Endothelial cell of umbilical vein (primary cell): ENCODE measurements at regions of chr14 and their contacts with region 1.

Region 1: DNA sequence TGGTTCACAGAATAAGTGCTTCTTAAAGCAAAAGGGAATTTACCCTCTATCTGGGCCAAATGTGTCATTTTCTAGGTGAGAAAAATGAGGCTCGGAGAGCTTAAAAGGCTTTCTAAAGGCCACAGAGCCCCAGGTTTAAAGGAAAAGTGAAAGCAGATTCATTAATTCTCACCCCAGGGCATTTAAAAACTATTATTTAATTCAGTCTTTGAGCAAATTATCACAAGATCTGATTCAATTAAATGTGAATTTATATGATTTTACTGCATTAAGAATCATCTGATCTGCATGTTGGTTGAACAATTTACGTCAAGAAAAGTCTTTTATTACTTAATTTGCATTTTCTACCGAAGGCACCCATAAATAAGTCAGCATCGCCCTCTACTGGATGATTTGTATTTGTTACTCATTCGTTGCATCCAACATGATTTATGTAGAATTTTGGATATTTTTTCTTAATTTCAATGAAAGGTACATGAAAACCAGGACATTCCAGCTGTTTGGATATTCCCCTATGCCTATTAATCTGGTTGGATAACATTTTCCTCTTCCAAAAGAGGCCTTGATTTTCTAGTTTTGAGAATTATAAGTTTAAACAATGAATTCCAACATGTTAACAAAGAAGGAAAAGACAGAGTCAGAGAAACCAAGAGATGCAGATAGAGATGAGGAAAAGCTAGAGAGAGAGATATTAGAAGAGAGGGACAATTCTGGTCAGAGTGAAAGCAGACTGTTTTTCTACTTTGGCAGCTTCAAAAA is 19.1 kb upstream of the DHRS7 start:
- DNase-seq: peak; percentile 74
- H3K4me3 ChIP-seq: peak overlapping the region; percentile 15 to 67 (median 22)
- H3K27ac ChIP-seq: no peak overlapping the region
- H3K4me1 ChIP-seq: no peaks in the 10 kb centered on the region
- H3K27me3 ChIP-seq: peaks cover 0 to 8% of the 10 kb centered on the region in 2 experiments
- CTCF ChIP-seq: peak; percentile 34 to 45
- POLR2A ChIP-seq: no peak

Region 2: DNA sequence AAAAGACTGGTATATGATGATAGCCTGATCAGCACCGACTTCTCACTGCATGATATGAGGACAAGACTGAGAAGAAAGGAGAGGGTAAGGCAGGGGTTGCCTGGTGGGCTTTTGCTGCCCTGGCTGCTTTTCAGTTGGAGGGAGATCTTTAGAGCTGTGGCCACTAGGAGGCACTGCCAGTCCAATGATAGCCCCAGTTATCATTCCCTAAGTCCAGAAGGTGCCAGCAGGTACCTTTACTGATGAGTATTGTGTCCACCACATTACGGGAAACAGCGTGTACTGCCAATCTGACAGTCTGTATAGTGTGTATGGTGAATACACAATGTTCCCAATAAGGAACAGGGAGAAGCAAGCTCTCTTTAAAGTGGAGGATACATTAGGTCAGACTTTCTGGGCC is 551.9 kb before region 1 on chr14:
- CTCF ChIA-PET with region 1: interaction called, 21 read pairs
- POLR2A ChIA-PET with region 1: no interaction called
- dilution Hi-C with region 1: no loop called
- intact Hi-C with region 1: loop called (anchors 1 kb)
- DNase-seq: peak; percentile 24
- H3K4me3 ChIP-seq: no peak overlapping the region
- H3K27ac ChIP-seq: no peak overlapping the region
- H3K4me1 ChIP-seq: no peaks in the 10 kb centered on the region
- H3K27me3 ChIP-seq: peaks cover 16 to 47% of the 10 kb centered on the region in 2 experiments
- CTCF ChIP-seq: peak; percentile 49 to 52
- POLR2A ChIP-seq: no peak

Region 3: GRCh38 chr14:59863806-59864525 is 320.4 kb before region 1 on chr14:
- CTCF ChIA-PET with region 1: no interaction called
- POLR2A ChIA-PET with region 1: no interaction called
- dilution Hi-C with region 1: no loop called
- intact Hi-C with region 1: no loop called
- DNase-seq: no peak
- H3K4me3 ChIP-seq: no peak overlapping the region
- H3K27ac ChIP-seq: no peak overlapping the region
- H3K4me1 ChIP-seq: no peaks in the 10 kb centered on the region
- H3K27me3 ChIP-seq: peaks cover 6 to 33% of the 10 kb centered on the region in 2 experiments
- CTCF ChIP-seq: no peak
- POLR2A ChIP-seq: no peak

Region 4: DNA sequence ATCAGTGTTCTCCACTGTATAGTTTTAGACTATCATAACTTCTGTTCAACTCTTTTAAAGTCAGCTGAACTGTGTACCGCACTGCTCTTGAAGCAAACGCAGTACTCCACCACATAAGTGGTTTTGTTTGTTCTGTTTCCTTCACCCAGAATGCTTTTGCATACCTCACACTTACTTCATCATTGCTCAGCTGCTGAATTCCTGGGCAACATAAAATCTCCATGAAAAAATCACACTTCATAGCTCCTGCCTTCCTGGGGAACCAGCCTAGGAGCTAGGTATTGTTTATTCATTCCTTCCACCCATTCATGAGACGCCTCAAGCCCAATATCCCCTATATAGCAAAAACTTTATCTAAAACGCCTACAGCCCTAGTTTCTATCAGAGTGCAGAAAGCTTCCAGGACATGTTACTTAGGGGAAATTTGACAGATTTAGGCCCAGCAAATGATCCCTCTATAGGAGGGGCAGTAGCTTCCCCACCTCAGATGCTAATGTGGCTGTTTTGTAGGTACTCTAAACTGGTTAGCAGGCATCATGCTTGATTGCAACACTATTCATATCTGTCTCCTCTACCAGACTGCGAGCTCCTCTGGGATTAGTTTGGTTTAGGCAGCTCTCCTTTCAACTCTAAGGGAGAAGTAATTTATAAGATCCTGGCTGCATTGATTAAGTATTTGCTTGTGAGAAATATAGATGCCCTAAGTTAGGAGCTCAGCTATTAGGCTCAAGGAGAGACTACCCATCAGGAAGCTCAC is 219.9 kb before region 1 on chr14:
- CTCF ChIA-PET with region 1: interaction called, 324 read pairs
- POLR2A ChIA-PET with region 1: no interaction called
- dilution Hi-C with region 1: no loop called
- intact Hi-C with region 1: loop called (anchors 1 kb)
- DNase-seq: no peak
- H3K4me3 ChIP-seq: no peak overlapping the region
- H3K27ac ChIP-seq: no peak overlapping the region
- H3K4me1 ChIP-seq: no peaks in the 10 kb centered on the region
- H3K27me3 ChIP-seq: peaks cover 5 to 21% of the 10 kb centered on the region in 2 experiments
- CTCF ChIP-seq: no peak
- POLR2A ChIP-seq: no peak

Region 5: DNA sequence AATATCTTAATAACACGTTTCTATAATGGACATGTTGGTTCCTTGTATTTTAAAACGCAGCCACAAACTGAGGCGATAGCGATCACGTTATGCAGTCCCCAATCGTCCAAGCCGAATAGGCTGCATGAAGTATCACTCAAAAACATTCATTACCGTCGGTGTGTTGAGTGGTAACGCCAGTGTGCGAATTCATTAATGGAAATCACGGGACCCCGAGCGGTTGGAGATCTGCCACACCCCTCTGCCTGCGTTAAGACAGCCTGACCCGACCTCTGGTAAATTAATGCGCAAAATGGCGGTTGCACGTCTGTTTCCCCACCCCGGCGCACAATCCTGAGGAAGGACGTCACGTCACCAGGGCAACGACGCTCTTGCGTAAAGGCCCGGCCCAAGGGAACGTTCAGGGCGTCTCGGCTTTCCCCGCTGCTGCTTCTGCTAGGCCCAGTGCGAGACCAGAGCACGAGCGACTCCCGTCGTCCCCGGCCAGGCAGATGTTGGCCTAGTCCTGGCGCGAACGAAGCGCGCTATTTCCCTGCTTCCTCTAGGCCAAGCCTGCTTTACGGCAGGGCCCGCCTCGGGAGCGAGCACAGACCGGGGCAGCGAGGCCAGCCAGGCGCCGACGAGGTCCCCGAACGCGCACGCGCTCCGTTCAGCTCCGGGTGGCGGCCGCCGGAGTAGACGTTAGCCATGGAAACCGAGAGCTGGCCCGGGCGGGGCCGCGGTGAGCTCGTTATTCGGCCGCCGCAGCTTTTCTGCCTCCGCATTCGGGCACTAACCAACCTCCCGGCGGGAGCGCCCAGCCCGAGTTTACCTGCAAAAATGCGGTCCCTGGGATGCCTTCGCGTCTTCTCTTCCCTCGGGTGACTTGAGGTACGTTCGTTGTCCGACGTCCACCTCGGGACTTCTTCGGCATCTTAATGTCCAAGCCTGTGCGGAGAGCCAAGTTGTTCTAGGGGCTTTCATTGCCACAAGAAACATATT is 92.5 kb before region 1 on chr14 and contains the start of gene PCNX4:
- CTCF ChIA-PET with region 1: interaction called, 15 read pairs
- POLR2A ChIA-PET with region 1: no interaction called
- dilution Hi-C with region 1: no loop called
- intact Hi-C with region 1: no loop called
- DNase-seq: peak; percentile 99
- H3K4me3 ChIP-seq: peak within 1 kb of the TSS; percentile 68 to 86 (median 86)
- H3K27ac ChIP-seq: peak within 1 kb of the TSS; percentile 93
- H3K4me1 ChIP-seq: peaks cover 25% of the 10 kb centered on the region
- H3K27me3 ChIP-seq: no peaks in the 10 kb centered on the region
- CTCF ChIP-seq: no peak
- POLR2A ChIP-seq: peak; percentile 96
- total RNA-seq, gene PCNX4: 41.4 and 51.6 TPM in 2 replicates

Region 6: GRCh38 chr14:60171690-60172089 is 12.6 kb before region 1 on chr14:
- CTCF ChIA-PET with region 1: interaction called, 20 read pairs
- POLR2A ChIA-PET with region 1: no interaction called
- dilution Hi-C with region 1: no loop called
- intact Hi-C with region 1: no loop called
- DNase-seq: no peak
- H3K4me3 ChIP-seq: no peak overlapping the region
- H3K27ac ChIP-seq: no peak overlapping the region
- H3K4me1 ChIP-seq: no peaks in the 10 kb centered on the region
- H3K27me3 ChIP-seq: peaks cover 3 to 7% of the 10 kb centered on the region in 2 experiments
- CTCF ChIP-seq: no peak
- POLR2A ChIP-seq: no peak